AG04450 (cell line): ENCODE measurements at regions of chr2 and their contacts with region 1.

Region 1: GRCh38 chr2:218286570-218287459 is 5.5 kb downstream of the TMBIM1 start:
- DNase-seq: peak; percentile 84
- H3K4me3 ChIP-seq: peak overlapping the region; percentile 64
- H3K27ac ChIP-seq: peak overlapping the region; percentile 100
- H3K27me3 ChIP-seq: no peaks in the 10 kb centered on the region
- CTCF ChIP-seq: no peak

Region 2: GRCh38 chr2:218275371-218276072 is 11.3 kb before region 1 on chr2:
- CTCF ChIA-PET with region 1: interaction called, 39 read pairs
- POLR2A ChIA-PET with region 1: interaction called, 17 read pairs
- DNase-seq: no peak
- H3K4me3 ChIP-seq: no peak overlapping the region
- H3K27ac ChIP-seq: no peak overlapping the region
- H3K27me3 ChIP-seq: no peaks in the 10 kb centered on the region
- CTCF ChIP-seq: no peak

Region 3: DNA sequence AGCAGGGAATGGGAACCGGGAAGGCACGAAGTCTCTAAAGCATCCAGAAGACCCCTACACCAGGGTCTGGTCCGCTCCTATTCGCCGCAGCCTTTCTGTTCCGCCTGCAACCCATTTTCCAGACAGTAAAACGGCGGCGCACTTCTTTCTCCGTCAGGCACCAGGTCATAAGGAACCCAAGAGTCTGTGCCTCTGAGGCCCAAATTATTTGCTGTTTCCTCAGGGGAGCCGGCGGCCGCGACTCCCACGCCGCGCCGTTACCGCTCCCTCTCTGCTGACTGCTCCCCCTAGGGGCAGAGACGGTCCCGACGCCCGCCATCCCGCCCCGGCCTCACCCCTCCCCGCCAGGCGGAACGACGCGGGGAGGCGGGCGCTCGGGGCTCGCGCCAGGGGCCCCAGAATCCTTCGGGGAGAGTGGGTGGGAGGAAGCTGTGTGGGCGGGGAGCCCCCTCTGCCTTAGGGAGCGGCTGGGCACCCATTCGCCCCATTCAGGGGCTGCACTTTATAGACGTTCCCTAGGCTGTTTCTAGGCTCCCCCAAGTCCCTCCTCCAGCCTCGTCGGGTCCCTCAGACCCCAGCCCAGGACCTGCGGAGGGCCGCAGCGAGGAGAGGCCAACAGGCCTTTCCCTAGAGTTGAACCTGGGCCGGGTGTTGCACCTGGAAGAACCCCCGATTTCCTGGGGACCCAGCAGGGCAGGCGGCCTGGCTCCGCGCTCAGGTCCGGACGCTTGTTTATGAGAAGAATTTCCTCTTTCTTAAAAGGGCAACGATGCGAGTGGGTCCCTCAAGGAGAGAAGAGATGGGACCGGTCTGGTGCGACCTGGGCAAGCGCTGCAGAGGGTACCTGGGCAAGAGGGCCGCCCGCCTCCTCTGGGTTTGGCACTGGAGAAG is 109.2 kb after region 1 on chr2:
- CTCF ChIA-PET with region 1: interaction called, 64 read pairs
- POLR2A ChIA-PET with region 1: interaction called, 7 read pairs
- DNase-seq: peak; percentile 94
- H3K4me3 ChIP-seq: peak overlapping the region; percentile 76
- H3K27ac ChIP-seq: peak overlapping the region; percentile 98
- H3K27me3 ChIP-seq: no peaks in the 10 kb centered on the region
- CTCF ChIP-seq: peak; percentile 75

Region 4: DNA sequence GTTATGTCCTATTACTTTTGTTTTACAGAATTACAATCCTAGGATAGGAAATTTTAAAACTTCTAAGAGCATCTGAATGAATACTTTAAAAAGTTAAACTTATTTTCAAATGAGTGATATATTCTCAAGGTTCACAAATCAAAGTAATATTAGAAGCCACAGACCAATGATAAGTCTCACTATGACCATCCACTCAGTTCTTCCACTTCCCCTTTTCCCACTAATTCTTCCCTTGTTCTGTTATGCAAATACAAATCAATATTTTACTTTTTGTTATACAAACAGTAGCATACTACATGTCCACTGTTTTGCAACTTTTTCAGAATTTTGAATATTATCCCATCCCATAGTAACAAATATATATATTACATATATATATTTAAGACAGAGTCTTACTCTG is 261.2 kb after region 1 on chr2:
- CTCF ChIA-PET with region 1: no interaction called
- POLR2A ChIA-PET with region 1: no interaction called
- DNase-seq: no peak
- H3K4me3 ChIP-seq: no peak overlapping the region
- H3K27ac ChIP-seq: no peak overlapping the region
- H3K27me3 ChIP-seq: no peaks in the 10 kb centered on the region
- CTCF ChIP-seq: no peak